ENCODE measurements at regions of chr4 and their contacts with region 1.

Region 1: GRCh38 chr4:337143-337931 is at the start of gene ZNF141:
- DNase-seq: peak; percentile 97
- H3K4me3 Mint-ChIP-seq: peak within 1 kb of the TSS; percentile 99
- H3K27ac Mint-ChIP-seq: peak within 1 kb of the TSS; percentile 100
- H3K4me1 Mint-ChIP-seq: peaks cover 14% of the 10 kb centered on the region
- H3K27me3 Mint-ChIP-seq: peaks cover 2% of the 10 kb centered on the region
- total RNA-seq, gene ZNF141: 25.4 and 27.0 TPM in 2 replicates

Region 2: DNA sequence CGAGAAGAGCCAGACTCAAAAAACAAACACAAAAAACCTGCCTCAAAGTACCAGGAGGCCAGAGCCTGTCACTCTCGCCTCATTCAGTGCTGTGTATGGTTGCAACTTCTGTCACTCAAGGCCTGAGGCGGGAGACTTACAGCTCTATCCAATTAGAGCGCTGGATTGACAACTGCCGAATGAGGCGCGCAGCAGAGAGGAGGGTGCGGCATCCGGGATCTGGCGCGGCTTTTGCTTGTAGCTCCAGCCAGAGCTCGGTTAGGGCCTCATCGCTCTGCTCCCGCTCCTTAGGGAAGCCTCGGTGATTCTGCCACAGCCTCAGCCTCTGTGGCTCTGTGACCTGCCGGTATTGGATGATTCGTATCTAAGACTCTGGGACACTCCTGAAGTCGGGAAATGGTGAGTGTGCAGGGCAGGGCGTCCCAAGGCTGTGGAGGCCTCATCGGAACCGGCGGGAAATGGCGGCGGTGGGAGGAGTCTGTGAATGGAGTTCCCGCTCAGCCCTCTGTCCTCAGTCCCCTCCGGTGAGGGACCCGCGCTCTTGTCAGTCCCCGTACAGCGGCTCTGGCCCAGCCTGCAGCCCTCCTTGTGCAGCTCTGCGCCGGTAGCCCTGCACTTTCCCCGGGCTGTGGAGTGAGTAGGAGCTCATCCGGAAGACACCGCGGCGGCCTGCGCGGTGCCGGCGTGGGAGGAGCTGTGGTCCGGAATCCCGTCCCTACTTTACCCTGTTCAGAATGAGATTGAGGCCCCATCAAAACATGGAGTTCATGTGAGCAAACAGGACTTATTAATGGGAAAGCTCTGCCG is 212.9 kb before region 1 on chr4 and contains the start of gene ZNF718:
- intact Hi-C with region 1: loop called (anchors 5 kb)
- DNase-seq: peak; percentile 97
- H3K4me3 Mint-ChIP-seq: peak within 1 kb of the TSS; percentile 100
- H3K27ac Mint-ChIP-seq: peak within 1 kb of the TSS; percentile 99
- H3K4me1 Mint-ChIP-seq: peaks cover 25% of the 10 kb centered on the region
- H3K27me3 Mint-ChIP-seq: no peaks in the 10 kb centered on the region
- total RNA-seq, gene ZNF718: 7.6 and 7.7 TPM in 2 replicates

Region 3: DNA sequence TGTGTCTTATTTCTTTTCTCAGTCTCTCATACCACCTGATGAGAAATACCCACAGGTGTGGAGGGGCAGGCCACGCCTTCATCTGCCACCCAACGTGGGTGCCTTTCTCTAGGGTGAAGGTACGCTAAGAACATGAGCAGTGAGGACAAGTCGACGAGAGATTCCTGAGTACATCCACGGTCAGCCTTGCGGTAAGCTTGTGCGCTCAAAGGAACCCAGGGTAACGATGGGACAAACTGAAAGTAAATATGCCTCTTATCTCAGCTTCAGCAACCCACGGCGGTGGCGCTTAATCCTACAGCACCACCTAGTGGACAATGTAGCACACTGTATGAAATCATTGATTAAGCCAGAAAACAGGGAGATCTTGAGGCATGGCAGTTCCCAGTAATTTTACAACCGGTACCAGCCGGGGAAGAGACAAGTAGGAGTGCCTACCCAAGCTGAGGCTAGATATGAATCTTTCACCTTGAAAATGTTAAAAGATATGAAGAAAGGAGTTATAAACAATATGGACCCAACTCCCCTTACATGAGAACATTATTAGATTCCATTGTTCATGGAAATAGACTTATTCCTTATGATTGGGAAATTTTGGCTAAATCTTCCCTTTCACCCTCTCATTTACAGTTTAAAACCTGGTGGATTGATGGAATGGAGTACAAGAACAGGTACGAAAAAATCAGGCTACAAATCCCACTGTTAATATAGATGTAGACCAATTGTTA is 95.1 kb before region 1 on chr4:
- intact Hi-C with region 1: loop called (anchors 5 kb)
- DNase-seq: peak; percentile 91
- H3K4me3 Mint-ChIP-seq: peak overlapping the region; percentile 82
- H3K27ac Mint-ChIP-seq: peak overlapping the region; percentile 63
- H3K4me1 Mint-ChIP-seq: peaks cover 8% of the 10 kb centered on the region
- H3K27me3 Mint-ChIP-seq: no peaks in the 10 kb centered on the region

Region 4: DNA sequence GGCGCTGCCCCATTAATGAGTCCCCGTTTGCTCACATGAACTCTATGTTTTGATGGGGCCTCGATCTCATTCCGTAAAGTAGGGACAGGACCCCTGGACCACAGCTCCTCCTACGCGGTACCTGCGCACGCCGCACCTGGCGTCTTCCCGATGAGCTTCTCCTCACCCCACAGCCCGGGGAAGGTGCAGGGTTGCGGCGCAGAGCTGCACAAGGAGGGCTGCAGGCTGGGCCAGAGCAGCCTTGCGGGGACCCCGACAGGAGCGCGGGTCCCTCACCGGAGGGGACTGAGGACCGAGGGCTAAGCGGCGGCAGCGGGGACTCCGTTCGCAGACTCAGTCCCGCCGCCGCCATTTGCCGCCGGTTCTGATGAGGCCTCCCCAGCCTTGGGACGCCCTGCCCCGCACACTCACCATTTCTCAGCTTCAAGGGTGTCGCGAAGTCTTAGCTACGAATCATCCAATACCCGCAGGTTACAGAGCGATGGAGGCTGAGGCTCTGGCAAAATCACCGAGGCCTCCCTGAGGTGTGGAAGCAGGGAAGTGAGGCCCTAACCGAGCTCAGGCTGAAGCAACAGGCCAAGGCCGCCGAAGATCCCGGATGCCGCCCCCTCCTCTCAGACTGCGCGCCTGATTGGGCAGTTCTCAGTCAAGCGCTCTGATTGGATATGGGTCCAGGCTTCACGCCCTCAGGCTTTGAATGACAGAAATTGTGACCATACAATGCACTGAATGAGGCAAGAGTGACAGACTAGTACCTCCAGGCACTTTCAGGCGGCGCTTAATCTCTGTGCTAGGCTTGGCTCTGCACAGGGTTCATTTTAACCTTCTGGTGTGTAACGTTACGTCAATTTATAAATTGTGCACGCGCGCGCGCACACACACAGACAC is 136.5 kb after region 1 on chr4:
- intact Hi-C with region 1: loop called (anchors 1 kb)
- DNase-seq: peak; percentile 98
- H3K4me3 Mint-ChIP-seq: peak overlapping the region; percentile 99
- H3K27ac Mint-ChIP-seq: peak overlapping the region; percentile 100
- H3K4me1 Mint-ChIP-seq: peaks cover 22% of the 10 kb centered on the region
- H3K27me3 Mint-ChIP-seq: no peaks in the 10 kb centered on the region

Region 5: DNA sequence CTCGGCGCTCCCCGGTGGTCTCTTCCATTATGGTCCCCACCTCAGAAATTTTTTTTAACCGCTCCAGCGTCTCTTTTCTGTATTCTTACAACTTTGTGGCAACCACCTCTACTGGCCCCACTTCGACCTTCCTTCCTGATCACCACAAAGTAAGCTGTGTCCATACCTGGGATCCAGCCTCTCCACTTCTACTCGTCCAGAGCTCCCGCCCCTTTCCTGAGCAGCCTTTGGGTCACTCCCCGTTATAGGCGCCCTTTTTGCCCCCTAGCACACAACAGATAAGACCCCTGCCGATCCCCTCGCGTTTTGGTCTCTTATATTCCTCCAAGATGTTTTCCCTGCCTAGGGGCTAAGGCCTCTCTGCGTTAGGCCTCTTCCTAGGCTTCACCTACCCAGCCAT is 162.2 kb after region 1 on chr4:
- intact Hi-C with region 1: loop called (anchors 1 kb)
- DNase-seq: peak; percentile 69
- H3K4me3 Mint-ChIP-seq: peak overlapping the region; percentile 93
- H3K27ac Mint-ChIP-seq: peak overlapping the region; percentile 96
- H3K4me1 Mint-ChIP-seq: peaks cover 25% of the 10 kb centered on the region
- H3K27me3 Mint-ChIP-seq: no peaks in the 10 kb centered on the region

Region 6: DNA sequence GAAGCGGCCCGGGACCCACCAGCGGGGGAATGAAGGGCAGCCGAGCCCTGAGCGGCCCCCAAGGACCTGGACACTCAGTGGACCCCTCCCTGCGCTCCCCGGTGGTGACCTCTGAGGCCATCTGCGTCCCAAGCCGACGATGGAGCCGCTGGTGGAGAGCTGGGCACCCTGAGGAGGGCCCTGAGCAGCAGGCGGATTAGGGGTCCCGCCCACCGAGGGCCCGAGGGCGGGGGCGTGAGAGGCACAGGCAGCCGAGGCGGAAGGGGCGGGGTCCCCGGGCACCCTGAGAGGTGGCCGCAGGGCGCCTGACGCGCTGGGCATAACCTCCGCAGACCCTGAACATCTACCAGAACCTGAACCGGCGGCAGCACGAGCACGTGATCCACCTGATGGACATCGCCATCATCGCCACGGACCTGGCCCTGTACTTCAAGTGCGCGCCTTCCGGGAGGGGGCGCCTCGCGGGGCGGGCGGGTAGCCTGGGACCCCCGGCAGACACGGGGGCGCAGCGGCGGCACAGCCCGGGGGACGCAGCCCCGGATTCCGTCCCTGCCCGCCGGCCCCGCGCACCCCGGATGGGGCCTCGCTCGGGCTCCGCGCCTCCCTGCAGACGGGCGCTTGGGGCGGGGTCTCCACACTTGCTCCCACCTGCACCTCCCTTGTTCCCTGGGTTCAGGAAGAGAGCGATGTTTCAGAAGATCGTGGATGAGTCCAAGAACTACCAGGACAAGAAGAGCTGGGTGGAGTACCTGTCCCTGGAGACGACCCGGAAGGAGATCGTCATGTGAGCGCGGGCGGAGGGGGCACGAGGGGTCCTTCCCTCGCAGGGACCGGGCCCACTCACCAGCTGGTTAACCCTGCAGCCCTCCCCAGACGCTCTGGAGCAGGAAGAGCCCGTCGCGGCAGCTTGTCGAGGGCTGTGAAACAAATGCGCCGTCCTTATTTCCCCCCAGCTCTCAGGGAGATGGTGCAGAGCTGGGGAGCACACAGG is 326.4 kb after region 1 on chr4:
- intact Hi-C with region 1: loop called (anchors 1 kb)
- DNase-seq: peak; percentile 93
- H3K4me3 Mint-ChIP-seq: peak overlapping the region; percentile 84
- H3K27ac Mint-ChIP-seq: peak overlapping the region; percentile 84
- H3K4me1 Mint-ChIP-seq: peaks cover 6% of the 10 kb centered on the region
- H3K27me3 Mint-ChIP-seq: no peaks in the 10 kb centered on the region

Measured in activated CD4-positive, alpha-beta T cell treated with anti-CD3 and anti-CD28 coated beads, Interleukin-2, amount 10 ng/mL, durations not matched to agents 24 days and 14 days (primary cell).